PC-9 (cell line): ENCODE measurements at regions of chr20 and their contacts with region 1.

Region 1: DNA sequence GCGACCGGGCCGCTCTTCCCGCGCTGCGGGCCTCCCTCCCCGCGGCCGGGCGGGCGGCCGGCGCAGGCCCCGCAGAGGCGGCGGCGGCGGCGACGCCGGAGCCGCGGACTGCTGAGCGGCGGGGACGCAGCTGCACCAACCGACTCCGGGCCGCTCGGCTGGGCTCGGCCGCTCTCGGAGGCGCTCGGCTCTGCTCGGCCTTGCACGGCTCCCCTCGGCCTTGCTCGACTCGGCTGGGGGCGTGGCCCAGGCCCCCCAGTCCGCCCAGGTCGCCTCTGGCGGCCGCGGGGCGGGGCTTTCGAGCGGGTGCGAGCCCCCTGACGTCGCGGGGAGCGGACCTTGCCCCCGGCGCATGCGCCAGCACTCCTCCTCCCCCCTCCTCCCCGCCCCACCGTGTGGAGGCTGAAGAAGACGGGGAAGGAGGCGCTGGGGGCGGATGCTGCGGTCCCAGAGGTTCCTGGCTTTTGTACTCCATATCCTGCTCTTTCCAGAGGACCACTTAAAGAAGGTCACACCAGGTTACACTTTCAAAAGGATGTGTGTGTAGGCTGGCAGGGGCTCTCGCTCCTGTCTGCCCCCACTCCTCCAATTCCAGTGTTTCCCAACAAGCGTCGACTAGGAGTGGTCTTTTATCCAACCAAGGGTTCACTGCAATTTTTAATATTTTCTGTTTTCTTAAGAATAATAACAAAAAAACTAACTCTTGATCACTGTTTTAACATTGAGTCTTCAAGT is at the start of gene ZHX3:
- DNase-seq: peak; percentile 87 to 99
- H3K4me3 ChIP-seq: peak within 1 kb of the TSS; percentile 83
- H3K27ac ChIP-seq: peak within 1 kb of the TSS; percentile 51
- H3K4me1 ChIP-seq: peaks cover 32% of the 10 kb centered on the region
- H3K27me3 ChIP-seq: no peaks in the 10 kb centered on the region
- CTCF ChIP-seq: no peak
- total RNA-seq, gene ZHX3: 21.5 and 23.3 TPM in 2 replicates

Region 2: DNA sequence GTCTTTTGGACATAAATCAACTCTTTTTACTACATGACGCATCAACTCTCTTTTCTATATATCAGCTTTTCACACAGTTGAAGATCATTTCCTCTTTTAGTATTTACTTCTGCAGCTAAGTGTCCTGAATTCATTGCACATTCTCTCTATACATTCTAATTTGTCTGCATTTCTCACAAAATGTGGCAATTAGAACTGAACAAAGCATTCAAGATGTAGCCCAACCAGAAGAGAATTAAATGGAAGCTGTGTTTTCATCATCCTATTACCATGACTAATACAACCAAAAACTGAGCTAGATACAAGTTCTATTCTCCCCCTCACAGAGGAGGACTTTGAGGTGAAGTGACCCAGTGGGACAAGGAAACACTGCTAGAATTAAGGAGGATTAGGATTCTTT is 93.4 kb before region 1 on chr20:
- CTCF ChIA-PET with region 1: no interaction called
- POLR2A ChIA-PET with region 1: no interaction called
- intact Hi-C with region 1: no loop called
- DNase-seq: no peak
- H3K4me3 ChIP-seq: no peak overlapping the region
- H3K27ac ChIP-seq: no peak overlapping the region
- H3K4me1 ChIP-seq: no peaks in the 10 kb centered on the region
- H3K27me3 ChIP-seq: no peaks in the 10 kb centered on the region
- CTCF ChIP-seq: no peak

Region 3: GRCh38 chr20:41268917-41269652 is 48.6 kb before region 1 on chr20:
- CTCF ChIA-PET with region 1: no interaction called
- POLR2A ChIA-PET with region 1: no interaction called
- intact Hi-C with region 1: loop called (anchors 5 kb)
- DNase-seq: no peak
- H3K4me3 ChIP-seq: no peak overlapping the region
- H3K27ac ChIP-seq: no peak overlapping the region
- H3K4me1 ChIP-seq: peaks cover 18% of the 10 kb centered on the region
- H3K27me3 ChIP-seq: no peaks in the 10 kb centered on the region
- CTCF ChIP-seq: no peak

Region 4: DNA sequence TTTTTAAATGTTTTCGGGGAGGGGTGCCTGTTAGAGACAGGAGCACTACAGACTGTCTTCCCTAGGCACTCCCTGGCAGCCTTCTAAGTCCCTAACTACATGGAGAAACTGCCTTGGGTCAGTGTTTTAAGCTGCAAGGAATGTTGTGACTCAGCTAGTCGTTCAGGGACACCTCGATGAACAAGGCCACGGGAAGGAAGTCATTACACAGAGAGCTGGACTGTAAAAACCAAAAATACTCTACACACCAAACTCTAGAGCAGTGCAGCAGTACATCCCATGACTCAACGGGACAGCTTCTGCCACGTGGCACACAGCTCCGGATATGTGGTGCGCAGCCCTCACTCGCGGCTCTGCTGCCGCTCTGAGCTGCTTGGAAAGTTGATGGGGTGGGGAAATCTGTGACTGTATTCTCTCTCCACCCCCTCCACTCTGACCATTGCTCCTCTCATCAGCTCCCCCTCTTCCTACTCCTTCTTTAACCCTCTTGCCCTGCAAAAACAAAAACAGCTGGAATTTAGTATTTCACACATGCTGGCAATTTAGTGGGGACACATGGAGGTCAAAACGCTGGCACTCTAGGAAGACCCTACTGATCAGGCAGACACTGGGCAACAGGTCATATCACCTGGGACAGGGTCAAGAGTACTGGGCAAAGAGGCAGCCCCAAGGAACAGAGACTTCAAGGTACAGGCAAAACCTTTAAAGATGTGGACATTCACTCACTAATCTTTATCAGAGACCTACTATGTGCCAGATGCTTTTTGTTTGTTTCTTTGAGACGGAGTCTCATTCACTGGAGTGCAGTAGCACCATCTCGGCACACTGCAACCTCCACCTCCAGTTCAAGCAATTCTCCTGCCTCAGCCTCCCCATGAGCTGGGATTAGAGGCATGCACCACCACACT is 12.0 kb after region 1 on chr20:
- CTCF ChIA-PET with region 1: no interaction called
- POLR2A ChIA-PET with region 1: interaction called, 6 read pairs
- intact Hi-C with region 1: loop called (anchors 1 kb)
- DNase-seq: peak; percentile 59 to 96
- H3K4me3 ChIP-seq: peak overlapping the region; percentile 27; the same call in 1 of the 2 replicates
- H3K27ac ChIP-seq: peak overlapping the region; percentile 81
- H3K4me1 ChIP-seq: peaks cover 20% of the 10 kb centered on the region
- H3K27me3 ChIP-seq: no peaks in the 10 kb centered on the region
- CTCF ChIP-seq: no peak

Region 5: GRCh38 chr20:41391587-41392089 is 73.9 kb after region 1 on chr20:
- CTCF ChIA-PET with region 1: no interaction called
- POLR2A ChIA-PET with region 1: no interaction called
- intact Hi-C with region 1: loop called (anchors 1 kb)
- DNase-seq: peak; percentile 81 to 95
- H3K4me3 ChIP-seq: no peak overlapping the region
- H3K27ac ChIP-seq: peak overlapping the region; percentile 65
- H3K4me1 ChIP-seq: peaks cover 24% of the 10 kb centered on the region
- H3K27me3 ChIP-seq: no peaks in the 10 kb centered on the region
- CTCF ChIP-seq: no peak

Region 6: GRCh38 chr20:41877911-41878310 is 560.2 kb after region 1 on chr20:
- CTCF ChIA-PET with region 1: no interaction called
- POLR2A ChIA-PET with region 1: no interaction called
- intact Hi-C with region 1: no loop called
- DNase-seq: no peak
- H3K4me3 ChIP-seq: no peak overlapping the region
- H3K27ac ChIP-seq: no peak overlapping the region
- H3K4me1 ChIP-seq: no peaks in the 10 kb centered on the region
- H3K27me3 ChIP-seq: peaks cover 27% of the 10 kb centered on the region
- CTCF ChIP-seq: no peak